BJ (cell line): ENCODE measurements at regions of chr1 and their contacts with region 1.

Region 1: DNA sequence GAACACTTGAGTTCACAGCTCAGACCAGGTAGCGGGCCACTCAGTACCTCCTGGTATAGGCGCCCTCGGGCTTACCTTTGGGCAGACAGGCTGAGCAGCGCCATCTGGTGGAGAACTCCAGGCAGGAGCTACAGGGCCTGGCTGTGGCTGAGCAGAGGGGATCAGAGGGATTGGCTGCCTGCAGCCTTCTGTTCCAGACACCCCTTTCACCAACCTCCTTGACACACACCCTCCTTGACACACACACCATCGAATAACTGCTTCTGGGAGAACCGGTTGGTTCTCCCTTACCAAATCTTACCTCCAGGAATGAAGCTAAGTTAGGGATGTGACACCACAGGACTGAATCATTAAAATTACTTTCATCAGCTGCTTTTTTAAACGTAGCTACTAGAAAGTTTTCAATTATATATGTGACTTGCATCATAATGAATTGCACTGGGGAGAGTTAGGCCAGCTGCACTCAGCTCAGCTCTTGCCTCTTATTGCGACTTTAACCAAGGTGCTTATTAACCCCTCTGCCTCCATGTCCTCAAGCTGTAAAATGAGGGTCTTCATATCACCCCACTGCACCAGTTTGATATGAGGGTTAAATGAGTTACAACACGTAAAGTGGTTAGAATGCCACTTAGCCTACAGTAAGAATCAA is 6.6 kb downstream of the LIN28A start:
- DNase-seq: no peak
- H3K4me3 ChIP-seq: no peak overlapping the region
- H3K27me3 ChIP-seq: peaks cover 17% of the 10 kb centered on the region
- CTCF ChIP-seq: peak; percentile 95

Region 2: DNA sequence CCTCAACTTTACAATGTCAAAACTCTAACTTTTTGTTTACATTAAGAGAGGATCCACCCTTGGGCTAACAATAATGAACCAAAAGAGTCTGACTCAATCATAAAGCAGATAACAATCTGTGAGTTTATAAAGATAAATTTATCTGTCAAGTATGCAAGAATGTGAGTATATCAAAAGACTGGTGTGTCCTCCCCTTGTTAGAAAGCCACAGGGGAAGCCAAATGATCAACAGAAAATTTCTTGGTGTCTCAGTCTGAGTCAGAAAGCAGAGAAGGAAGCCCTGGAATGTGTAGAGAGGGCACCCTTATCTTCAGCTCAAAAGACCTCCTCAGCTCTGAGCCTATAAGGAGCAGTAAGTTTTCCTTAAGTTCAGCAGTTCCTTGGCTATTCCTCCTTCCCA is 319.5 kb before region 1 on chr1:
- CTCF ChIA-PET with region 1: interaction called, 14 read pairs
- POLR2A ChIA-PET with region 1: no interaction called
- DNase-seq: no peak
- H3K4me3 ChIP-seq: no peak overlapping the region
- H3K27me3 ChIP-seq: peaks cover 8% of the 10 kb centered on the region
- CTCF ChIP-seq: no peak

Region 3: GRCh38 chr1:26138974-26139558 is 278.2 kb before region 1 on chr1:
- CTCF ChIA-PET with region 1: no interaction called
- POLR2A ChIA-PET with region 1: no interaction called
- DNase-seq: no peak
- H3K4me3 ChIP-seq: no peak overlapping the region
- H3K27me3 ChIP-seq: no peaks in the 10 kb centered on the region
- CTCF ChIP-seq: no peak

Region 4: GRCh38 chr1:26431979-26432695 is 14.9 kb after region 1 on chr1 and contains the start of gene DHDDS:
- CTCF ChIA-PET with region 1: interaction called, 73 read pairs
- POLR2A ChIA-PET with region 1: no interaction called
- DNase-seq: peak; percentile 88
- H3K4me3 ChIP-seq: peak within 1 kb of the TSS; percentile 52
- H3K27me3 ChIP-seq: no peaks in the 10 kb centered on the region; the same call in 1 of the 2 replicates
- CTCF ChIP-seq: no peak
- polyA plus RNA-seq, gene DHDDS: 37.2 and 46.2 TPM in 2 replicates

Region 5: DNA sequence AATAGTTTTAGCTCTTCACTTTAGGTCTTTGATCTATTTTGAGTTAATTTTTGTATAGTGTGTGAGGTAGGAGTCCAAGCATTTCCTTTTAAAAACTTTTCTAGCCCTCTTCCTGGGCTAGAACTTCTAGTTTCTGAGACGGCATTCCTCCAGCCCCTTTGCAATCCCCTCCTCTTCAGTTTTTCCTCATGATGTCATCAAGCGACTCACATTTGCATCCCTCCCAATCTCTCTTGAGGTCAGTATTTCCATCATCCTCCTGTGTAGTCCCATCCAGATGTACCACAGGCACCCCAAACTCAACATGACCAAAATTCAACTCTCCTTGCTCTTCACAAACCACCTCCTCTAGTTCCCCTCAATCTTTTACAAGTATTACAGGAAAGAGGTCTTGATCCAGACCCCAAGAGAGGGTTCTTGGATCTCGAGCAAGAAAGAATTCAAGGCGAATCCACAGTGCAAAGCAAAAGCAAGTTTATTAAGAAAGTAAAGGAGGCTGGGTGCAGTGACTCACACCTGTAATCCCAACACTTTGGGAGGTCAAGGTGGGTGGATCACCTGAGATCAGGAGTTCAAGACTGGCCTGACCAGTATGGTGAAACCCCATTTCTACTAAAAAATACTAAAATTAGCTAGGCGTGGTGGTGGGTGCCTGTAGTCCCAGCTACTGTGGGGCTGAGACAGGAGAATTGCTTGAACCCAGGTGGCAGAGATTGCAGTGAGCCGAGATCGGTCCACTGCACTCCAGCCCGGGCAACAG is 65.9 kb after region 1 on chr1:
- CTCF ChIA-PET with region 1: no interaction called
- POLR2A ChIA-PET with region 1: no interaction called
- DNase-seq: no peak
- H3K4me3 ChIP-seq: no peak overlapping the region
- H3K27me3 ChIP-seq: no peaks in the 10 kb centered on the region
- CTCF ChIP-seq: no peak